IMR-90 (cell line): ENCODE measurements at regions of chr1 and their contacts with region 1.

Region 1: DNA sequence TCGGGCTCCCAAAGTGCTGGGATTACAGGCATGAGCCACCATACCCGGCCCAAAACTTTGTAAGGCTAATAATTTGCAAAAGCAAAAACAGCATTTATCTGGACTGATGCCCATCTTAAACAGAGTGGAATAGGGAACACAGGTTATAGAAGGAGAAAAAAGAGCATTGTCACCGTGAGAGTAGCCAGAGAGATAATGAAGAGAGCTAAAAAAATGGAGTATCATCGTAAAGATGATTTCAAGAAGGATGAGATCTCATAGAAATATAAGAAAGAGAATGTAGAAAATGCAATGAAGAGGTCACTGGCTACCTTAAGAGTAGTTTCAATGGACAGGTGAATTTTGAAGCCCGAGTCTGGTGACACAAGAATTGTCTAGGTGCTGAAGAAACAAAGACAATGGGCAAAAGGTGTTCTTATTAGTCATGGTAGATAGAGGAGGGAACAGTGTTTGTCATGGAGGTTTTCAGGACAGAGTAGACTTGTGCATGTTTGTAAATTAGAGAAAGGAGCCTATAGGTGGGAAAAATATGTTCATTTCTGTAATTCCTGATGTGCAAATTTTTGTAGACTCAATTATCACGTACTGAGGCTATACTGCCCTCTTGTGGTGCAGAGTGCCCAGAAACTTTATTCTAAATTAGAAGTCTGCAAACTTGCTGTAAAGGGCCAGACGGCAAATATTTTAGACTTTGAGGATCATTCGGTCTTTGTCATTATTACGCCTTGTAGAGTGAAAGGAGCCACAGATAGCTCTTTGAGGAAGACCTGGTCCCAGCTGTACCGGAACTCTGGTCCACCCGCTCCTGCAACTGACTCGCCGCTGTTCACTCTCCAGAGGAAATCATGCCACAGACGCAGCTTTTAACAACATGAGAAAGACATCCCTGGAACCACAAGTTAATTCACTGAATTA is 8.1 kb upstream of the TMEM183A start:
- DNase-seq: peak; percentile 52
- ATAC-seq: peak; percentile 72
- H3K4me3 ChIP-seq: no peak overlapping the region
- H3K27ac ChIP-seq: no peak overlapping the region
- H3K4me1 ChIP-seq: no peaks in the 10 kb centered on the region
- H3K27me3 ChIP-seq: peaks cover 6% of the 10 kb centered on the region
- CTCF ChIP-seq: peak; percentile 84
- POLR2A ChIP-seq: 0 out of 2 replicates have a peak, but pooled peaks have one; percentile 38
- RAD21 ChIP-seq: peak; percentile 79

Region 2: GRCh38 chr1:202462342-202463076 is 536.6 kb before region 1 on chr1:
- CTCF ChIA-PET with region 1: no interaction called
- POLR2A ChIA-PET with region 1: no interaction called
- dilution Hi-C with region 1: no loop called
- in situ Hi-C with region 1: no loop called
- intact Hi-C with region 1: loop called (anchors 5 kb)
- DNase-seq: no peak
- ATAC-seq: no peak
- H3K4me3 ChIP-seq: no peak overlapping the region
- H3K27ac ChIP-seq: no peak overlapping the region
- H3K4me1 ChIP-seq: peaks cover 5% of the 10 kb centered on the region
- H3K27me3 ChIP-seq: no peaks in the 10 kb centered on the region
- CTCF ChIP-seq: no peak
- POLR2A ChIP-seq: no peak
- RAD21 ChIP-seq: no peak

Region 3: GRCh38 chr1:202750758-202751157 is 248.3 kb before region 1 on chr1:
- CTCF ChIA-PET with region 1: no interaction called
- POLR2A ChIA-PET with region 1: no interaction called
- dilution Hi-C with region 1: no loop called
- in situ Hi-C with region 1: no loop called
- intact Hi-C with region 1: loop called (anchors 10 kb)
- DNase-seq: no peak
- ATAC-seq: no peak
- H3K4me3 ChIP-seq: no peak overlapping the region
- H3K27ac ChIP-seq: no peak overlapping the region
- H3K4me1 ChIP-seq: 0 out of 2 replicates have a peak, but pooled peaks cover 1% of the 10 kb centered on the region
- H3K27me3 ChIP-seq: no peaks in the 10 kb centered on the region
- CTCF ChIP-seq: 0 out of 2 replicates have a peak, but pooled peaks have one; percentile 10
- POLR2A ChIP-seq: no peak
- RAD21 ChIP-seq: no peak; the same call in 1 of the 2 replicates

Region 4: GRCh38 chr1:202926720-202927491 is 72.2 kb before region 1 on chr1 and contains the start of gene KLHL12:
- CTCF ChIA-PET with region 1: interaction called, 7 read pairs
- POLR2A ChIA-PET with region 1: no interaction called
- dilution Hi-C with region 1: no loop called
- in situ Hi-C with region 1: no loop called
- intact Hi-C with region 1: loop called (anchors 1 kb)
- DNase-seq: peak; percentile 96
- ATAC-seq: peak; percentile 99
- H3K4me3 ChIP-seq: peak within 1 kb of the TSS; percentile 83
- H3K27ac ChIP-seq: peak within 1 kb of the TSS; percentile 91
- H3K4me1 ChIP-seq: no peaks in the 10 kb centered on the region
- H3K27me3 ChIP-seq: no peaks in the 10 kb centered on the region
- CTCF ChIP-seq: peak; percentile 51
- POLR2A ChIP-seq: peak; percentile 88
- RAD21 ChIP-seq: peak; percentile 43
- total RNA-seq, gene KLHL12: 33.6 and 38.4 TPM in 2 replicates

Region 5: DNA sequence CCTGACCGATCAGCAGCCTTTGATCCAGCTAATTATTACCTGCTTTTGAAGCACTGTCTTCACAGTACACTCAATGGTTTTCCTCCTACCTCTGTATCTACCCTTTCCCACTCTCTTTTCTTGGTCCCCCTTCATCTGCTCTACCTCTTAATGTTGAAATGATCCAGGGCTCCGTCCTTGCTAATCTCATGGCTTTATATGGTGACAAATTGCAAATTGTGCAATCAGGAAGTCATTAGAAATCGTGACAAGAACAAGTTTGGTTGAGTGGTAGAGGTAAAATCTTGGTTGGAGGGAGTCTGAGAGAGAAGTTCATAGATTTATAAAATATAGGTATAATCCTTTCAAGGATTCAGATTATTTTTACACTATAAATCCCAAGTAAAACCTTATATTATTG is 22.5 kb before region 1 on chr1:
- CTCF ChIA-PET with region 1: no interaction called
- POLR2A ChIA-PET with region 1: no interaction called
- dilution Hi-C with region 1: no loop called
- in situ Hi-C with region 1: no loop called
- intact Hi-C with region 1: no loop called
- DNase-seq: no peak
- ATAC-seq: no peak
- H3K4me3 ChIP-seq: no peak overlapping the region
- H3K27ac ChIP-seq: no peak overlapping the region
- H3K4me1 ChIP-seq: no peaks in the 10 kb centered on the region
- H3K27me3 ChIP-seq: peaks cover 47% of the 10 kb centered on the region
- CTCF ChIP-seq: no peak
- POLR2A ChIP-seq: no peak
- RAD21 ChIP-seq: no peak

Region 6: DNA sequence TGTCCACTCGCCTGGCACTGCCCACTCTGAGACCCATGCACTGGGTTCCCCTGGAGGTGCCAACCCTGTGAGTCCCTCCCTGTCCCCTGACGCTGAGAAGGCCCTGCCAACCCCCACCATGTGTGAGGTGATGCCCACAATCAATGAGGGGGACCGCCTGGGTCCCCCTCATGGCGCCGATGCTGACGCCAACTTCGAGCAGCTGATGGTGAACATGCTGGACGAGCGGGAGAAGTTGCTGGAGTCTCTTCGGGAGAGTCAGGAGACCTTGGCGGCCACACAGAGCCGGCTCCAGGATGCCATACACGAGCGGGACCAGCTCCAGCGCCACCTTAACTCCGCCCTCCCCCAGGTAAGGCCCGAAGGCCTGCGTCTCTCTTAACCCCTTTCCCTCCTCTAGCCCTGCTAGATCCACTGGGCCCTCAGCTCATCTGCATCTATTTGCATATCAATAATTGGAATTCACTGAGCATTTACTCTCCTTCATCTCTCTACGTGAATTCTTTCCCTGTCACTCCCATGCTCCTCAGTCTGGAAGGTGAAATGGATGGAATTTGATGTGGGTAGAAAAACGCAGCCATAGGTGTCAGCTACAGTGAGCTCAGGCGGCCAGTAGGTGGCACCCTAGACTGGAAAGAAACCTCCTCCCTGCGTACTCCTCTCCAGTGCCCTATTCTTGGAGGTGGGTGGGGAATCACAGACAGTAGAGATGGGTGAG is 40.0 kb after region 1 on chr1:
- CTCF ChIA-PET with region 1: no interaction called
- POLR2A ChIA-PET with region 1: no interaction called
- dilution Hi-C with region 1: no loop called
- in situ Hi-C with region 1: no loop called
- intact Hi-C with region 1: no loop called
- DNase-seq: peak; percentile 65
- ATAC-seq: peak; percentile 79
- H3K4me3 ChIP-seq: no peak overlapping the region
- H3K27ac ChIP-seq: no peak overlapping the region
- H3K4me1 ChIP-seq: peaks cover 25% of the 10 kb centered on the region
- H3K27me3 ChIP-seq: no peaks in the 10 kb centered on the region
- CTCF ChIP-seq: peak; percentile 90
- POLR2A ChIP-seq: no peak
- RAD21 ChIP-seq: peak; percentile 90